ENCODE measurements at regions of chr19 and their contacts with region 1.

Region 1: GRCh38 chr19:5001615-5002014 is 32.7 kb downstream of the KDM4B start:
- DNase-seq: peak; percentile 66
- ATAC-seq: peak; percentile 78
- H3K4me3 Mint-ChIP-seq: no peak overlapping the region
- H3K27ac Mint-ChIP-seq: 0 out of 2 replicates have a peak overlapping the region, but pooled peaks have one; percentile 43
- H3K4me1 Mint-ChIP-seq: peaks cover 3% of the 10 kb centered on the region; the same call in 1 of the 2 replicates
- H3K27me3 Mint-ChIP-seq: no peaks in the 10 kb centered on the region
- CTCF ChIP-seq: peak; percentile 44

Region 2: DNA sequence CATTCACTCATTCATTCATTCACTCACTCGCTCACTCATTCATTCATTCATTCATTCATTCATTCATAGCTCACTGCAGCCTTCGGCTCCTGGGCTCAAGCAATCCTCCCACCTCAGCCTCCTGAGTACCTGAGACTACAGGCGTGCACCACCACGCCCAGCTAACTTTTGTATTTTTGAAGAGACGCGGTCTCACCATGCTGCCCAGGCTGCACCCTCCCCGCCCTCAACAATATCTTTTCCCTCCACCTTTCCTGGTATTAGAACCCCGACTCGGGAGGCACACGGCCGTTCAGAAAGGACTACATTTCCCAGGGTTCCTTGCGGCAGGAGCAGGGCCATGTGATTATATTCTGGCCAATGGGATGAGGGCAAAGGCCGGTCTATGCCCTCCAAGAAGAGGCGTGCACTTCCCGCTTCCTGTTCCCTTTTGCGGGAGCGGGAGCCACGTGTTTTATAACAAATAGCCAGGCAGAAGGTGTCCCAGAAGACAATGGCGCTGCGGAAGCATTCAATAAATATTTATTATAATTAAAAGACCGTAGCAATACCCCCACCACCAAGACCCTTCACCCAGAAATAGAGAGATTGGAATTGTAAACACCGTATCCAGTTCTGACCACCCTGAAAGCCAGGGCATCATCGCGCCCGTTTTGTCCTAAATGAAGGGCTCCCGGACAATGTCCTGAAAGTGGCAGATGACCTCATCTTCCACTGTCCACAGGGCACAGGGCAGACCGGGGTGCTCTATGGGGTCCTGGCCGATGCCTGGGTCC is 186.0 kb before region 1 on chr19:
- CTCF ChIA-PET with region 1: interaction called, 11 read pairs
- POLR2A ChIA-PET with region 1: no interaction called
- DNase-seq: peak; percentile 86
- ATAC-seq: peak; percentile 82
- H3K4me3 Mint-ChIP-seq: peak overlapping the region; percentile 58
- H3K27ac Mint-ChIP-seq: no peak overlapping the region
- H3K4me1 Mint-ChIP-seq: peaks cover 2% of the 10 kb centered on the region; the same call in 1 of the 2 replicates
- H3K27me3 Mint-ChIP-seq: peaks cover 25% of the 10 kb centered on the region
- CTCF ChIP-seq: no peak

Region 3: GRCh38 chr19:4939466-4939865 is 62.1 kb before region 1 on chr19:
- CTCF ChIA-PET with region 1: no interaction called
- POLR2A ChIA-PET with region 1: no interaction called
- DNase-seq: no peak
- ATAC-seq: no peak
- H3K4me3 Mint-ChIP-seq: no peak overlapping the region
- H3K27ac Mint-ChIP-seq: peak overlapping the region; percentile 66
- H3K4me1 Mint-ChIP-seq: no peaks in the 10 kb centered on the region
- H3K27me3 Mint-ChIP-seq: no peaks in the 10 kb centered on the region
- CTCF ChIP-seq: no peak

Region 4: GRCh38 chr19:4976401-4977298 is 25.0 kb before region 1 on chr19:
- CTCF ChIA-PET with region 1: interaction called, 14 read pairs
- POLR2A ChIA-PET with region 1: no interaction called
- DNase-seq: peak; percentile 65
- ATAC-seq: peak; percentile 78
- H3K4me3 Mint-ChIP-seq: no peak overlapping the region
- H3K27ac Mint-ChIP-seq: peak overlapping the region; percentile 96
- H3K4me1 Mint-ChIP-seq: peaks cover 32% of the 10 kb centered on the region
- H3K27me3 Mint-ChIP-seq: no peaks in the 10 kb centered on the region
- CTCF ChIP-seq: 0 out of 2 replicates have a peak, but pooled peaks have one; percentile 33

Region 5: DNA sequence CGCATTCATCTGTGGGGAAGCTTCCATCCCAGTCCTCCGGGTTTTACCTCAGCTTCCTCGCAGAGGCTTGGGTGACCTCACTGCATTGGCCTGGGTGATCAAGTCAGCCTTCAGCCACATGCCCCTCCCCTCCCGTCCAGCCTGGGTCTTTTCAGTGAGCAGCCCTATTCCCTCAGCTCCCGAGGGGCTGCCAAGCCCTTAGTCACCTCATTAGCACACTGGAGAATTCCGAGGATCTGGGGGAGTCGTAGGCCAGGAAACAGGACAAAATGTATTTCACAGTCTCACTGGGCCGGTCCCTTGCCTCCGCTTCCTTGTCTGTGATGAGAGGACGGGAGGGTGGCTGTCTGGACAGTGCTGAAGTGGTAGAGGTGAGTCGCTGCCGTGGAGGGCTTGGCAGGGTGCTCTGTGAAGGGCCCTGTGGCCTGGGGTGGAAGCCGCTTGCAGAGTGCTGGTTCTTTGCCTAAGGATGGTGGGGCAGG is 12.8 kb before region 1 on chr19:
- CTCF ChIA-PET with region 1: interaction called, 26 read pairs
- POLR2A ChIA-PET with region 1: interaction called, 3 read pairs
- DNase-seq: no peak
- ATAC-seq: peak; percentile 35
- H3K4me3 Mint-ChIP-seq: no peak overlapping the region
- H3K27ac Mint-ChIP-seq: peak overlapping the region; percentile 63; the same call in 1 of the 2 replicates
- H3K4me1 Mint-ChIP-seq: peaks cover 36% of the 10 kb centered on the region
- H3K27me3 Mint-ChIP-seq: no peaks in the 10 kb centered on the region
- CTCF ChIP-seq: no peak

Region 6: DNA sequence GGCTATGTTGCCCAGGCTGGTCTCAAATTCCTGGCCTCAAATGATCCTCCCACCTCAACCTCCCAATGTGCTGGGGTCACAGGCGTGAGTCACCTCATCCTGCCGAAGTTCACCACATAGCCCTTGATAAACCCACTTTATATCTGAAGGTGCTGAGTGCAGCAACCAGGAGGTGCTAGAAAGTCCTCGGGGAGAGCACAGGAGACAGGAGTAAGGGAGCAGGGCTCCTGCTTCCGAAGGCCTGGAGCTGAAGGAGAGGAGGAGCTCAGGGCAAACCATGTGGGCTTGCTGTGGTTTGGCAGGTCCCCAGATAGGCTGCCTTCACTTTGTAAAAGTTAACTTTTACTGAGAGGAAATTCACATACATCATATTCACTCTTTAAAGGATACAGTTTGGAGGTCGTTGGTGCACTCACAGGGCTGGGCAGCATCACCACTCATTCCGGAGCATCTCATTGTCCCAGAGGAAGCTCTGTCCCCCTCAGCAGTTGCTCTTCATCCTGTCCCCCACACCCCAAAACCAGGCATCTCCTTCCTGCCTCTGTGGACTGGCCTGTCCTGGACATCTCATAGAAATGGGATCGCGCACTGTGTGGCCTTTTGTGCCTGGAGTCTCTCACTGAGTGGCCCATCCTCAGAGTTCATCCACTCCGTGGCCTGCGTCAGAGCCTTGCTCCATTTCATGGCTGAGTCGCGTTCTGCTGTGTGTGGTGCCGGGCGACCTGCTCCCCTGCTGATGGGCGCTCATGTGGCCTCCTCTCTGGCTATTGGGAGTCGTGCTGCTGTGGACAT is 16.8 kb after region 1 on chr19:
- CTCF ChIA-PET with region 1: interaction called, 14 read pairs
- POLR2A ChIA-PET with region 1: no interaction called
- DNase-seq: no peak
- ATAC-seq: no peak
- H3K4me3 Mint-ChIP-seq: no peak overlapping the region
- H3K27ac Mint-ChIP-seq: no peak overlapping the region; the same call in 1 of the 2 replicates
- H3K4me1 Mint-ChIP-seq: 0 out of 2 replicates have a peak, but pooled peaks cover 2% of the 10 kb centered on the region
- H3K27me3 Mint-ChIP-seq: no peaks in the 10 kb centered on the region
- CTCF ChIP-seq: no peak